MCF 10A (cell line): ENCODE measurements at regions of chr1 and their contacts with region 1.

Region 1: DNA sequence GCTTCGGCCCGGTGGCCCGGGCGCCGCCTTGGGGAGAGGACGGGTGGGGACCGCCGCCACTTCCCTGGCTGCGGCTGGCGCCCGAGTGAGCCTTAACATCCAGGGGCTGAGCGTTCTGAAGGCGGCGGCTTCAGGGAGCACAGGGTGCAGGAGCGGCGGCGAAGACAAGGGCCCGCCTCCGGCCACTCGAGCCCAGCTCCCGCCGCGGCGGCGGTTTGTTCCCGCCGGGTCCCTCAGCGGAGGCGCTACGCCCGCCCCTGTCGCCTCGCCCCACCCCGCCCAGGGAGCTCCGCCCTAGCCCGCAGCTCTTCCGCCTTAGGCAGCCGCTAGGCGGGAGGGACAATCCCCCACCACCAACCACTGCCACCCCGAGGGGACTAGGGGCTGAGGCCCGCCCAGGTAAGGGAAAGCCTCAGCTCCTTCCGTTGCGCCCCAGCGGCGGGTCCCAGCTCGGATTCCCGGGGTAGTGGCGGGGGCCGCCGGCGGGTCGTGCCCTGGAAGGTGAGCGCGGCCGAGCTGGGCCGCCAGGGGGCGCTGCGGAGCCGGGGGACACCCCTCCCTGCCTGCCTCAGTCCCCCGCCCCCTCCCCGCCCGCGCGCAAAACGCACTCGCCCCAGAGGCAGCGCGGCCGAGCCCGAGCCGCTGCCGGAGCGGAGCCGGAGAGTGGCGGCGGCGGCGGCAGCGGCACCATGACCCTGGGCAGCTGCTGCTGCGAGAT is at the start of gene FOXD2:
- DNase-seq: peak; percentile 86
- H3K4me3 Mint-ChIP-seq: peak within 1 kb of the TSS; percentile 92
- H3K27ac Mint-ChIP-seq: peak within 1 kb of the TSS; percentile 35
- H3K4me1 Mint-ChIP-seq: peaks cover 17% of the 10 kb centered on the region
- H3K27me3 Mint-ChIP-seq: no peaks in the 10 kb centered on the region
- CTCF ChIP-seq: peak; percentile 97
- total RNA-seq, gene FOXD2: 0.27 and 0.44 TPM in 2 replicates

Region 2: DNA sequence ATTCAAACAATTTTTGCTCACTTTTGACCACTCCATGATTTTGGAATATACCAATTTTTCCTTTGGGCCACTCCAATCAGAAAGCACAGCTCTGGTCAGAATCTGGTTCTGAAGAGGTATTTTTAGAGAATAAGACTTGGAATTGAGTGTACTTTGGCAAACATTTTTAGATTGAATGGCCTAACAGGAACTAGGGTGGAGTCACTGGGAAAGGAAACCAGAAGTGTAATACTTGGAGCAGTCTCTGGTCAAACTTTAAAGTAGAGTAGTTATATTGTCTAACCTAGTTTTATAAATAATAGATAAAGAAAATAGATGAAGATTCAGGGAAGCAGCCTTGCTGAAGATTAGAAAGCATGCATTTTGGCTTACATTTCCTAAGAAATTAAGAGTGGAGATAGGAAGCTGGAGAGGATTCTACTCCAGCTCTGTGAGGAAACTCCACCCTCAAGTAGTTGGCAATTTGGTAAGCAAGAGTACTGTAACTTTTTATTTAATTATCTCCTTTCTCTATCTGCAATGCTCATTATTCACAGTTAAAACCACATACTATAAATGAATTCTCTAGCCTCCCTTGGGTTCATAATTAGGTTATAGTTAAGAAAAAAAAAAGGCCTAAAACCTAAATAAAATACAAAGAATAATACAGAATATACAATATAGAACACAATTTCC is 139.4 kb before region 1 on chr1:
- CTCF ChIA-PET with region 1: no interaction called
- POLR2A ChIA-PET with region 1: no interaction called
- intact Hi-C with region 1: no loop called
- DNase-seq: no peak
- H3K4me3 Mint-ChIP-seq: no peak overlapping the region
- H3K27ac Mint-ChIP-seq: no peak overlapping the region
- H3K4me1 Mint-ChIP-seq: no peaks in the 10 kb centered on the region
- H3K27me3 Mint-ChIP-seq: no peaks in the 10 kb centered on the region
- CTCF ChIP-seq: no peak

Region 3: DNA sequence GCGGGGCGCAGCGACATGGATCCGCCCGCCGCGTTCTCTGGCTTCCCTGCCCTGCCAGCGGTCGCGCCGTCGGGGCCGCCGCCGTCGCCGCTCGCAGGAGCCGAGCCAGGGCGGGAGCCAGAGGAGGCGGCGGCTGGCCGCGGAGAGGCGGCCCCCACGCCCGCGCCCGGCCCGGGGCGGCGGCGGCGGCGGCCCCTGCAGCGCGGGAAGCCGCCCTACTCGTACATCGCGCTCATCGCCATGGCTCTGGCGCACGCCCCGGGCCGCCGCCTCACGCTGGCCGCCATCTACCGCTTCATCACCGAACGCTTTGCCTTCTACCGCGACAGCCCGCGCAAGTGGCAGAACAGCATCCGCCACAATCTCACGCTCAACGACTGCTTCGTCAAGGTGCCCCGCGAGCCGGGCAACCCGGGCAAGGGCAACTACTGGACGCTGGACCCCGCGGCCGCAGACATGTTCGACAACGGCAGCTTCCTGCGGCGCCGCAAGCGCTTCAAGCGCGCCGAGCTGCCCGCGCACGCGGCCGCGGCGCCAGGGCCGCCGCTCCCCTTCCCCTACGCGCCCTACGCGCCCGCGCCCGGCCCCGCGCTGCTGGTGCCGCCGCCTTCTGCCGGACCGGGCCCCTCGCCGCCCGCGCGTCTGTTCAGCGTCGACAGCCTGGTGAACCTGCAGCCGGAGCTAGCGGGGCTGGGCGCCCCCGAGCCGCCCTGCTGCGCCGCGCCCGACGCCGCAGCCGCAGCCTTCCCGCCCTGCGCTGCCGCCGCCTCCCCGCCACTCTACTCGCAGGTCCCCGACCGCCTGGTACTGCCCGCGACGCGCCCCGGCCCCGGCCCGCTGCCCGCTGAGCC is 21.1 kb before region 1 on chr1:
- CTCF ChIA-PET with region 1: interaction called, 14 read pairs
- POLR2A ChIA-PET with region 1: no interaction called
- intact Hi-C with region 1: no loop called
- DNase-seq: no peak
- H3K4me3 Mint-ChIP-seq: no peak overlapping the region
- H3K27ac Mint-ChIP-seq: no peak overlapping the region
- H3K4me1 Mint-ChIP-seq: no peaks in the 10 kb centered on the region
- H3K27me3 Mint-ChIP-seq: no peaks in the 10 kb centered on the region
- CTCF ChIP-seq: no peak

Region 4: DNA sequence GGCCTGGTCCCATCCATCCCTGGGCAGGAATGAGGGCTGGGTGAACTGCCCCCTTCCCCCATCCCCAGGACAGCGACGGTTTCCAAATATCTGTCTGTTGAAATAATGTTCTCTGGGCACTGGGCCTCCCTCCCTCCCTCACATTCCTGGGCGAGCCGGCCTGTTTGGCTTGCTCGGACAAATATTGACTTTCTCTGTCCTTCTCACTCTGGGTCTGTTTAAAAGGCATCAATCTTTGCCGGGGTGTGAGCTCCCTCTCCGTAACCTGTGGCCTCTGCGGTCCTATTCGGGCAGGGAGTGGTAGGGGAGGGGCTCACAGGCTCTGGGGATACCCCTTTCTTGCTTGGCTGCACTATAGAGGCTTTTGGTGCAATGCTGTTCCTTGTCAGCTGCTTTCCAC is 40.5 kb after region 1 on chr1:
- CTCF ChIA-PET with region 1: interaction called, 50 read pairs
- POLR2A ChIA-PET with region 1: interaction called, 10 read pairs
- intact Hi-C with region 1: no loop called
- DNase-seq: peak; percentile 42
- H3K4me3 Mint-ChIP-seq: peak overlapping the region; percentile 38
- H3K27ac Mint-ChIP-seq: peak overlapping the region; percentile 73
- H3K4me1 Mint-ChIP-seq: peaks cover 37% of the 10 kb centered on the region
- H3K27me3 Mint-ChIP-seq: no peaks in the 10 kb centered on the region
- CTCF ChIP-seq: no peak

Region 5: GRCh38 chr1:47569681-47570470 is 132.3 kb after region 1 on chr1:
- CTCF ChIA-PET with region 1: interaction called, 77 read pairs
- POLR2A ChIA-PET with region 1: interaction called, 17 read pairs
- intact Hi-C with region 1: loop called (anchors 1 kb)
- DNase-seq: peak; percentile 86
- H3K4me3 Mint-ChIP-seq: peak overlapping the region; percentile 58
- H3K27ac Mint-ChIP-seq: peak overlapping the region; percentile 92
- H3K4me1 Mint-ChIP-seq: peaks cover 11% of the 10 kb centered on the region
- H3K27me3 Mint-ChIP-seq: no peaks in the 10 kb centered on the region
- CTCF ChIP-seq: peak; percentile 33

Region 6: DNA sequence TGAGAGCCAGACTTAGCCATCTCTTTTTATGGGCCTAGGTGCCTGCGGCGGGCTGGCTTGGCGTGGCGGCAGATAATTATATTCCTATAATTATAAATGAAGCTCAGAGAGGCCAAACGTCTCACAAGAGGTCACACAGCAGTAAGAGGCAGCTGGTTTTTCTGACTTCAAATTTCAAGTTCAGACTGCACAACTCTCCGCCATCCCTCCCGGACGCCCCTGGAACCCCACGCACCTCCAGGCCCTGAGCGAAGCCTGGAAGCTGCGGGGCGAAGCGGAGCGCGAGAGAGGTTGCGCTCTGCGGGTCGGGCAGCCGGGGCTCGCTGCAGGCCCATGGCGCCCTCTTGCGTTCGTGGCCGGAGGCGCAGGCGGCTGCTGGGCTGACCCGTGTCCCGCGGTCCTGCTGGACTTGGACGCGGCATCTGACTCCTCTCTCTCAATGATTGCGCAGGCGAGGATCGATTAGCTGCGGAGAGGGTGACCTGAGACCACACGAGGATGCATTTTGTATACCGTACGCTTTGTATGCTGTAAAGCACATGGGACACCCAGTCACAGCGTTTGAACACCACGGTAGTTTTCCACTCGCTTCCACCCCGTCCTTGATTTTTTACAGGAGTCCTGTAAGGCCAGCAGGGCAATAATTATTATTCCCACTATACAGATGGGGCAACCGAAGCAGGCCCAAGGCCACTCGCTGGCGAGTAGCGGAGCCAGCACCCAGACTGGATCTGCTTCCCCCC is 272.9 kb after region 1 on chr1:
- CTCF ChIA-PET with region 1: interaction called, 696 read pairs
- POLR2A ChIA-PET with region 1: interaction called, 8 read pairs
- intact Hi-C with region 1: loop called (anchors 1 kb)
- DNase-seq: peak; percentile 47
- H3K4me3 Mint-ChIP-seq: no peak overlapping the region
- H3K27ac Mint-ChIP-seq: no peak overlapping the region
- H3K4me1 Mint-ChIP-seq: no peaks in the 10 kb centered on the region
- H3K27me3 Mint-ChIP-seq: peaks cover 54% of the 10 kb centered on the region
- CTCF ChIP-seq: peak; percentile 99